ENCODE measurements at regions of chr10 and their contacts with region 1.

Region 1: GRCh38 chr10:22655311-22655981 is 58.9 kb downstream of the PIP4K2A start:
- DNase-seq: peak in 3 of 5 donors; percentile 66 to 87 (median 74)
- H3K4me3 ChIP-seq: peak overlapping the region; percentile 21
- H3K4me3 Mint-ChIP-seq: peak overlapping the region; percentile 72 to 90 (median 84)
- H3K27ac ChIP-seq: peak overlapping the region; percentile 12
- H3K27ac Mint-ChIP-seq: peak overlapping the region; percentile 88 to 99 (median 96)
- H3K4me1 ChIP-seq: peaks cover 98% of the 10 kb centered on the region
- H3K4me1 Mint-ChIP-seq: peaks cover 94 to 100% (median 100%) of the 10 kb centered on the region in 3 donors
- H3K27me3 ChIP-seq: no peaks in the 10 kb centered on the region
- H3K27me3 Mint-ChIP-seq: no peaks in the 10 kb centered on the region

Region 2: GRCh38 chr10:21797984-21798765 is 857.3 kb before region 1 on chr10:
- CTCF ChIA-PET with region 1: no interaction called
- POLR2A ChIA-PET with region 1: no interaction called
- DNase-seq: peak in 1 of 5 donors; percentile 30
- H3K4me3 ChIP-seq: no peak overlapping the region
- H3K4me3 Mint-ChIP-seq: peak overlapping the region in 4 of 7 donors; percentile 5 to 24 (median 14)
- H3K27ac ChIP-seq: no peak overlapping the region
- H3K27ac Mint-ChIP-seq: peak overlapping the region; percentile 7 to 82 (median 34)
- H3K4me1 ChIP-seq: peaks cover 20% of the 10 kb centered on the region
- H3K4me1 Mint-ChIP-seq: peaks cover 20 to 30% (median 22%) of the 10 kb centered on the region in 3 donors
- H3K27me3 ChIP-seq: no peaks in the 10 kb centered on the region
- H3K27me3 Mint-ChIP-seq: no peaks in the 10 kb centered on the region

Region 3: DNA sequence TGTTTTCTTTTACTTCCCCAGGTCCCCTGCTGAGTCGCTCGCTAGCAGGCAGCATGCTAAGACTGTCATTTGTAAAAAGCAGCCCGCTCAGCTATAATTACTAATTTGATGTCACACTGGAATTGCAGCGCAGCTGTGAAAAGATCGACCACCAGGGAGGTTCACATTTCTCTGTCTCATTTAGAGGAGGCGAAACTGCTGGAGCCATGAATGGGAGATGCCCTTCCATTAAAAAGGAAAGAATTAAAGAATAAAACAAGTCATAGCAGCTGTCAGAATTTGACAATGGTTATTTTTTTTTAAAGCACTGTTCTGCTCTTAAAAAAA is 94.6 kb before region 1 on chr10:
- CTCF ChIA-PET with region 1: no interaction called
- POLR2A ChIA-PET with region 1: no interaction called
- DNase-seq: no peak
- H3K4me3 ChIP-seq: no peak overlapping the region
- H3K4me3 Mint-ChIP-seq: no peak overlapping the region
- H3K27ac ChIP-seq: no peak overlapping the region
- H3K27ac Mint-ChIP-seq: peak overlapping the region in 2 of 8 donors; percentile 9 to 77
- H3K4me1 ChIP-seq: no peaks in the 10 kb centered on the region
- H3K4me1 Mint-ChIP-seq: peaks cover 28 to 36% (median 32%) of the 10 kb centered on the region in 3 donors
- H3K27me3 ChIP-seq: no peaks in the 10 kb centered on the region
- H3K27me3 Mint-ChIP-seq: peaks cover 0 to 1% of the 10 kb centered on the region in 2 donors

Region 4: DNA sequence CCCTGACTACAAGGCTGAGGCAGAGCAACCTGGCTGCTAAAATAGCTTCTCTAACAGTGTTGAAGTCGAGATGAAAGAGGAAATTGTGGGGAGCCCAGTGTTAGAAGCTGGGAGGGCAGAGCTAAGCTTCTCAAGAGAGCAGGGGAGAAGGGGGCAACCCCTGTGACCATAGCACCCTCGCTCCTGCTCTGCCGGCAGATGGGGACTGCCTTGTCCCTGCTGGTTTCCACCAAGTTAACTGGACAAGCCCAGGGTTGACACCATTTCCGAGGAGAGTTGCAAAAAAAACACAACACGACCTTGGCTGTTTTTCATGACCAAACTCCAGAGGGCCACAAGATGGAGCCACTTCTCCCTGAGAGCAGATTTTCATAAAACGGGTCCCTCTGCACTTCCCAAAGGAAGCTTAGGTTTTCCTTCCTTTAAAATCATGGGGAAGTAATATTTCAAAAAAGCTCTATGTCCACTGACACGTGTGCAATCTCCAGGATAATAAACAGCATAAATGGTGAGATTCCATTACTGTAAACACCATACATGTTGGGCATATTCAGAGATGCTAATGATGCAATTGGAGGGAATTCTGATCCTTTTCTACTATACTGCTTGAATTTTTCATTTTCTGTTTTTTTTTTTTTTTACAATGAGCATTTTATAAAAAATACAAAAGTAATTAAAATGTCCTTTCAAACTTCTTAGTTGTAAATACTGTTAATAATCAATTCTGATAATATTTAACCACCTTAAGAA is 81.5 kb before region 1 on chr10:
- CTCF ChIA-PET with region 1: interaction called, 14 read pairs
- POLR2A ChIA-PET with region 1: interaction called, 3 read pairs
- DNase-seq: peak in 4 of 5 donors; percentile 3 to 64 (median 40)
- H3K4me3 ChIP-seq: no peak overlapping the region
- H3K4me3 Mint-ChIP-seq: peak overlapping the region; percentile 4 to 82 (median 58)
- H3K27ac ChIP-seq: peak overlapping the region; percentile 35
- H3K27ac Mint-ChIP-seq: peak overlapping the region; percentile 68 to 96 (median 90)
- H3K4me1 ChIP-seq: peaks cover 33% of the 10 kb centered on the region
- H3K4me1 Mint-ChIP-seq: peaks cover 66 to 89% (median 87%) of the 10 kb centered on the region in 3 donors
- H3K27me3 ChIP-seq: no peaks in the 10 kb centered on the region
- H3K27me3 Mint-ChIP-seq: no peaks in the 10 kb centered on the region

Region 5: DNA sequence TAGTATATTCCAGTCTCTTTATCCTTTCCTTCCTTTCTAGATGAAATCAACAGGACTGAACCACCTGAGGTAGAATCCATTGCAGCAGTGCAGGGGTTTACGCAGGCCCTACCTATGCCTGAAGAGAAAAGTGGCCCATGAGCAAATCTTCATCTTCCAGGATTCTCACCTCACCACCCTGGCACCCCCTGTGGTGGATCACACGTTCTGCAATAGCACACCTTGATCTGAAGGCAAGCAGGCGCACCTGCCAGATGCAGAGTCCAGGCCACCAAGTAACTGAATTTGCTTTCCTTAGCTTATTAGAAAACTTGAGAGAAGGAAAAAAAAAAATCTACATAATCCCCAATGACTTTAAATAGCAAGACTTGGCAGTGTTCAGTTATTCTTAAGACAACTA is 62.4 kb before region 1 on chr10:
- CTCF ChIA-PET with region 1: no interaction called
- POLR2A ChIA-PET with region 1: no interaction called
- DNase-seq: no peak
- H3K4me3 ChIP-seq: no peak overlapping the region
- H3K4me3 Mint-ChIP-seq: peak overlapping the region in 4 of 7 donors; percentile 7 to 84 (median 20)
- H3K27ac ChIP-seq: no peak overlapping the region
- H3K27ac Mint-ChIP-seq: peak overlapping the region; percentile 73 to 98 (median 83)
- H3K4me1 ChIP-seq: peaks cover 39% of the 10 kb centered on the region
- H3K4me1 Mint-ChIP-seq: peaks cover 77 to 94% (median 92%) of the 10 kb centered on the region in 3 donors
- H3K27me3 ChIP-seq: no peaks in the 10 kb centered on the region
- H3K27me3 Mint-ChIP-seq: peaks cover 0 to 3% of the 10 kb centered on the region in 2 donors

Region 6: DNA sequence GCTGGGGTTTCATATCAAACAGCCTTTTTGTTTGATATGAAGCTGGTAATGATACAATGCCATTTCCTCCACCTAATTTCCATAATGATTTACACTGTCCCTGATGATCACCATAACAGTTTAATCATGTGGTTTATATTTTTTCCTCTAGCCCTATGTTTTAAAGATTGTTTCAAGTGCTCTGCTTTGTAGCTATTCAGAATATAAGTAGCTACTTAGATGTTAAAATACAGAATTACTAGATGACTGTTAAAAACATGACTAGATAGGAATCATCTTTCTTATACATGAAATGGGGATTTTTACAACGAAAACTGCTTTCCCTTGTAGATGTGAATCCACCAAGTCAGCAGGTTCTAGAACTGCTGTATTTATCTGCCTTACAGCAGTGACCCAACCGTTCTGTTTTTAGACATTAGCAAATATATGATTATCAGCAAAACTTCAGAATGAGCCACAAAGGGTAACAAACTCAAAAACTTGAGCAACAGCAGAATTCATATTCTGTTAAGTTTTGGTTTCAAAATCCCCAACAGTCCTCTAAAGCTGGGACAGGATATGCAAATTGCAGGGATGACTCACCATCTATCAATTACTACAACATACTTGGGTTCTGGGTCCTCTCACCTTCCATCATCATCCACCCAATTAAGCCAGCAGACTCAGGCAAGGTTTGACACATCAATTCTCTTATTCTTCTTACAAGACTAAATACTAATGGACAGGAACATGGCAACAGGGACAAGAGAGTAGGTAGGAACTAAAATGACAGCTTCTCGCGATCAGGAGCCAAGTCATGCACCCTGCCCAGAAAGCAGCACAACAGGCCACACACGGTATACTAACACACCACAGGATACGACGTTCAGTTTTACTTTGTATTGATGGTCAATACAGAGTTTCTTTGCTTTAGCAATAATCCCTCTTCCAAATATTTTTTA is 24.9 kb before region 1 on chr10:
- CTCF ChIA-PET with region 1: interaction called, 7 read pairs
- POLR2A ChIA-PET with region 1: interaction called, 12 read pairs
- DNase-seq: peak in 4 of 5 donors; percentile 36 to 71 (median 62)
- H3K4me3 ChIP-seq: peak overlapping the region; percentile 19
- H3K4me3 Mint-ChIP-seq: peak overlapping the region; percentile 13 to 85 (median 82)
- H3K27ac ChIP-seq: peak overlapping the region; percentile 75
- H3K27ac Mint-ChIP-seq: peak overlapping the region; percentile 86 to 99 (median 98)
- H3K4me1 ChIP-seq: peaks cover 99% of the 10 kb centered on the region
- H3K4me1 Mint-ChIP-seq: peaks cover 95 to 99% (median 98%) of the 10 kb centered on the region in 3 donors
- H3K27me3 ChIP-seq: no peaks in the 10 kb centered on the region
- H3K27me3 Mint-ChIP-seq: no peaks in the 10 kb centered on the region

Region 7: GRCh38 chr10:22682237-22683139 is 27.0 kb after region 1 on chr10:
- CTCF ChIA-PET with region 1: interaction called, 14 read pairs
- POLR2A ChIA-PET with region 1: interaction called, 3 read pairs
- DNase-seq: peak; percentile 47 to 82 (median 82)
- H3K4me3 ChIP-seq: peak overlapping the region; percentile 13
- H3K4me3 Mint-ChIP-seq: peak overlapping the region; percentile 68 to 86 (median 75)
- H3K27ac ChIP-seq: peak overlapping the region; percentile 78
- H3K27ac Mint-ChIP-seq: peak overlapping the region; percentile 95 to 100 (median 98)
- H3K4me1 ChIP-seq: peaks cover 97% of the 10 kb centered on the region
- H3K4me1 Mint-ChIP-seq: peaks cover 88 to 97% (median 96%) of the 10 kb centered on the region in 3 donors
- H3K27me3 ChIP-seq: no peaks in the 10 kb centered on the region
- H3K27me3 Mint-ChIP-seq: no peaks in the 10 kb centered on the region

Region 8: GRCh38 chr10:22714479-22715289 is 59.2 kb after region 1 on chr10 and contains the start of gene PIP4K2A:
- CTCF ChIA-PET with region 1: interaction called, 5 read pairs
- POLR2A ChIA-PET with region 1: interaction called, 10 read pairs
- DNase-seq: peak; percentile 71 to 82 (median 81)
- H3K4me3 ChIP-seq: peak within 1 kb of the TSS; percentile 91
- H3K4me3 Mint-ChIP-seq: peak within 1 kb of the TSS; percentile 90 to 99 (median 95)
- H3K27ac ChIP-seq: peak within 1 kb of the TSS; percentile 88
- H3K27ac Mint-ChIP-seq: peak within 1 kb of the TSS; percentile 84 to 95 (median 93)
- H3K4me1 ChIP-seq: peaks cover 20% of the 10 kb centered on the region
- H3K4me1 Mint-ChIP-seq: peaks cover 30 to 34% (median 33%) of the 10 kb centered on the region in 3 donors
- H3K27me3 ChIP-seq: no peaks in the 10 kb centered on the region
- H3K27me3 Mint-ChIP-seq: peaks cover 0 to 4% of the 10 kb centered on the region in 2 donors
- total RNA-seq, gene PIP4K2A: 116 to 130 TPM

Measured in CD8-positive, alpha-beta memory T cell (primary cell).